Calu3 (cell line): ENCODE measurements at regions of chr5 and their contacts with region 1.

Region 1: GRCh38 chr5:123916331-123917121 is 404.5 kb downstream of the CSNK1G3 start:
- DNase-seq: peak; percentile 21
- H3K4me3 Mint-ChIP-seq: peak overlapping the region; percentile 25
- H3K27ac Mint-ChIP-seq: peak overlapping the region; percentile 49
- H3K4me1 Mint-ChIP-seq: peaks cover 21% of the 10 kb centered on the region
- H3K27me3 Mint-ChIP-seq: no peaks in the 10 kb centered on the region
- CTCF ChIP-seq: no peak

Region 2: DNA sequence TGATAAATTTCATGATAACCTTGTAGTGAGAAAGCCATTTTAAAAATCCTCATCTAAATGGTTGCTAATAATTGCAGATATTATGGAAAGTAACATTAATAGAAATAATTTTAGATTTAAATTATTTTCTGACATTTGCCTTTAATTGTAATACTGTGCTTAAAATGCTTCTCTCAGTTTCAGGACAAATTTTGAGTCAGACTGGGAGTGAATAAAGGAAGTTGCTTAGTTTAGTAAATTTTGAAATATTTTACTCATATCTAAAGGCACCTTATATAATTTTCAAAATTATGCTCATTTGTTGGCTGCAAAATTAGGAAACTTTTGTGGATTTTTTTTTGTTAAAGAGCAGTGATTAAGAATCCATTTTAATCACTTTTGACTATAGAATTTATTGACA is 310.7 kb before region 1 on chr5:
- CTCF ChIA-PET with region 1: no interaction called
- intact Hi-C with region 1: no loop called
- DNase-seq: no peak
- H3K4me3 Mint-ChIP-seq: no peak overlapping the region
- H3K27ac Mint-ChIP-seq: no peak overlapping the region
- H3K4me1 Mint-ChIP-seq: no peaks in the 10 kb centered on the region
- H3K27me3 Mint-ChIP-seq: no peaks in the 10 kb centered on the region
- CTCF ChIP-seq: no peak

Region 3: DNA sequence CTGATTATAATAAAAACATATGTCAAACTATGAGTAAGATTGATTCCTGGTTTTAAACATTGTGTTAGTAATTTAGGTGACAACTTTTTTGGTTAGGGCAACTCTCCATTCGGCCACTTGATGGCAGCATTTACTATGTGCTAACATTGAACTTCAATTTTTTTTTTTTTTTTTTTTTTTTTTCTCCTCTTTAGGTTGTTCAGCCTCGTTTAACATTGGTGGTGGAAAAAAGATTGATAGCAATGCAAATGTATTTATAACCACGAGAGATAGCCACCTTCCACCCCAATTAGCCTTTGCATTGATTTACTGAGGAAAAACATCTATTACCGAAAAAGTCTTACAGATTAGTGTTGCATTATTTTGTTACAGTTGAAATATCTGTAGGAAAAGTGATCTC is 245.5 kb before region 1 on chr5:
- CTCF ChIA-PET with region 1: no interaction called
- intact Hi-C with region 1: loop called (anchors 10 kb)
- DNase-seq: peak; percentile 47
- H3K4me3 Mint-ChIP-seq: no peak overlapping the region
- H3K27ac Mint-ChIP-seq: no peak overlapping the region
- H3K4me1 Mint-ChIP-seq: no peaks in the 10 kb centered on the region
- H3K27me3 Mint-ChIP-seq: no peaks in the 10 kb centered on the region
- CTCF ChIP-seq: peak; percentile 77

Region 4: GRCh38 chr5:123827811-123828210 is 88.7 kb before region 1 on chr5:
- CTCF ChIA-PET with region 1: no interaction called
- intact Hi-C with region 1: no loop called
- DNase-seq: no peak
- H3K4me3 Mint-ChIP-seq: no peak overlapping the region
- H3K27ac Mint-ChIP-seq: no peak overlapping the region
- H3K4me1 Mint-ChIP-seq: no peaks in the 10 kb centered on the region
- H3K27me3 Mint-ChIP-seq: no peaks in the 10 kb centered on the region
- CTCF ChIP-seq: no peak